IMR-90 (cell line): ENCODE measurements at regions of chr3 and their contacts with region 1.

Region 1: DNA sequence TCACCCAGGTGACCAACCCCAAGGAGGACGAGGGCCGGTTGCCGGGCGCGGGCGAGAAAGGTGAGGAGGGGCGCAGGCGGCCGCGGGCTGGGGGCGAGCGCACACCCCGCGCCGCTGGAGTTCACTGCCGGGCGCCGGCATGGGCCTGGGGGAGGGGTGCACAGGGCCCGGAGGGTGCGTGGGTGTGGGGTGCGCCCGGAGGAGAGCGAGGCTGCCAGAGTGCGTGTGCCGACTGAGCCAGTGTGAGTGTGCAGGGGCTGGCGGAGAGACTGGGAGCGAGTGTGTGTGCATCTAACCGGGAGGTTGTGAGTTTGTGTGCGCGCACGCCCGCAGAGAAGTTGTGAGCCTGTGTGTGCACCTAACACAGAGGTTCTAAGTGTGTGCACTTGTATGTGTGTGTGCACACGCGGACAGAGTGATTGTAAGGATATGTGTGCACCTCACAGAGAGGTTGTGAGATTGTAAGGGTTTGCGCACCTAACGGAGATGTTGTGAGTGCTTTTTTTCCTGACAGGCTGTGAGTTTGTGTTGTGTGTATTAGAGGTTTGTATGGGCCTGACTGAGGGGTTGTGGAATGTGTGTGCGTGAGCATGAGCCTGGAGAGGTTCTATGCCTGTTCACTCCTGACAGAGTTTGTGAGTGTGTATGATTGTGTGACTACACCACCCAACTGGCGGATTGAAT is 681 bp downstream of the CTDSPL start:
- DNase-seq: peak; percentile 75
- ATAC-seq: peak; percentile 32
- H3K4me3 ChIP-seq: peak overlapping the region; percentile 78
- H3K27ac ChIP-seq: peak overlapping the region; percentile 46
- H3K4me1 ChIP-seq: peaks cover 17% of the 10 kb centered on the region
- H3K27me3 ChIP-seq: no peaks in the 10 kb centered on the region
- CTCF ChIP-seq: no peak
- POLR2A ChIP-seq: no peak
- RAD21 ChIP-seq: no peak

Region 2: GRCh38 chr3:37680401-37680800 is 182.0 kb before region 1 on chr3:
- CTCF ChIA-PET with region 1: no interaction called
- POLR2A ChIA-PET with region 1: no interaction called
- dilution Hi-C with region 1: no loop called
- in situ Hi-C with region 1: no loop called
- intact Hi-C with region 1: no loop called
- DNase-seq: no peak
- ATAC-seq: no peak
- H3K4me3 ChIP-seq: no peak overlapping the region
- H3K27ac ChIP-seq: no peak overlapping the region
- H3K4me1 ChIP-seq: no peaks in the 10 kb centered on the region
- H3K27me3 ChIP-seq: peaks cover 3% of the 10 kb centered on the region
- CTCF ChIP-seq: no peak
- POLR2A ChIP-seq: no peak
- RAD21 ChIP-seq: no peak

Region 3: GRCh38 chr3:37751967-37752648 is 110.3 kb before region 1 on chr3:
- CTCF ChIA-PET with region 1: no interaction called
- POLR2A ChIA-PET with region 1: no interaction called
- dilution Hi-C with region 1: no loop called
- in situ Hi-C with region 1: no loop called
- intact Hi-C with region 1: no loop called
- DNase-seq: no peak
- ATAC-seq: no peak
- H3K4me3 ChIP-seq: no peak overlapping the region
- H3K27ac ChIP-seq: no peak overlapping the region
- H3K4me1 ChIP-seq: no peaks in the 10 kb centered on the region
- H3K27me3 ChIP-seq: peaks cover 13% of the 10 kb centered on the region
- CTCF ChIP-seq: no peak
- POLR2A ChIP-seq: no peak
- RAD21 ChIP-seq: no peak

Region 4: GRCh38 chr3:37882711-37883110 is 20.4 kb after region 1 on chr3:
- CTCF ChIA-PET with region 1: no interaction called
- POLR2A ChIA-PET with region 1: no interaction called
- dilution Hi-C with region 1: no loop called
- in situ Hi-C with region 1: no loop called
- intact Hi-C with region 1: loop called (anchors 2 kb)
- DNase-seq: no peak
- ATAC-seq: no peak
- H3K4me3 ChIP-seq: no peak overlapping the region
- H3K27ac ChIP-seq: no peak overlapping the region
- H3K4me1 ChIP-seq: peaks cover 2% of the 10 kb centered on the region
- H3K27me3 ChIP-seq: no peaks in the 10 kb centered on the region
- CTCF ChIP-seq: no peak
- POLR2A ChIP-seq: no peak
- RAD21 ChIP-seq: no peak

Region 5: DNA sequence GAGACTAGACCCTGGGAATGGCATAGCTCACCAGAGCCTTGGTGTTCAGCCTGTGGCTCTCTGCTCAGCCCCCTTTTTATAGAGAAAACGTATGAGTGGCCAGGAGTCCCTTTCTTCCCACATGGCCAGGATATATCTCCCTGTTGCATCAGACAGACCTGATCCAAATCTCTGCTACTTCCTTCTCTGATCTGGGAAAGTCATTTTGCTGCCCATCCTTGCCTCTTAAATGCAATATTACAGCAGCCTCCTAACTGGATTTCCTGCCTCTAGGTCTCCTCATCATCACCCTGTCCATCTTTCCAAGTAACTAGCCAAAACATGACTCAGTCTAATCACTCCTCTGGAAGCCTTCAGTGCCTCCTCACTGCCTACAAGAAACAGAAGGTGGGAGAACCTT is 42.2 kb after region 1 on chr3:
- CTCF ChIA-PET with region 1: no interaction called
- POLR2A ChIA-PET with region 1: no interaction called
- dilution Hi-C with region 1: no loop called
- in situ Hi-C with region 1: loop called (anchors 5 kb)
- intact Hi-C with region 1: no loop called
- DNase-seq: peak; percentile 75
- ATAC-seq: peak; percentile 24
- H3K4me3 ChIP-seq: no peak overlapping the region
- H3K27ac ChIP-seq: no peak overlapping the region
- H3K4me1 ChIP-seq: peaks cover 25% of the 10 kb centered on the region
- H3K27me3 ChIP-seq: no peaks in the 10 kb centered on the region
- CTCF ChIP-seq: no peak
- POLR2A ChIP-seq: no peak
- RAD21 ChIP-seq: no peak

Region 6: GRCh38 chr3:37967260-37967881 is 105.0 kb after region 1 on chr3:
- CTCF ChIA-PET with region 1: interaction called, 31 read pairs
- POLR2A ChIA-PET with region 1: no interaction called
- dilution Hi-C with region 1: no loop called
- in situ Hi-C with region 1: loop called (anchors 5 kb)
- intact Hi-C with region 1: loop called (anchors 1 kb)
- DNase-seq: peak; percentile 65
- ATAC-seq: peak; percentile 97
- H3K4me3 ChIP-seq: no peak overlapping the region
- H3K27ac ChIP-seq: no peak overlapping the region
- H3K4me1 ChIP-seq: peaks cover 4% of the 10 kb centered on the region; the same call in 1 of the 2 replicates
- H3K27me3 ChIP-seq: no peaks in the 10 kb centered on the region
- CTCF ChIP-seq: peak; percentile 85
- POLR2A ChIP-seq: no peak
- RAD21 ChIP-seq: peak; percentile 90